Activated CD4-positive, alpha-beta T cell treated with anti-CD3 and anti-CD28 coated beads for 36 hours (primary cell): ENCODE measurements at regions of chr10 and their contacts with region 1.

Region 1: GRCh38 chr10:70619271-70620019 is 16.9 kb upstream of the PRF1 start:
- DNase-seq: no peak
- ATAC-seq: no peak
- H3K4me3 Mint-ChIP-seq: no peak overlapping the region
- H3K27ac Mint-ChIP-seq: no peak overlapping the region
- H3K4me1 Mint-ChIP-seq: peaks cover 16% of the 10 kb centered on the region
- H3K27me3 Mint-ChIP-seq: peaks cover 10% of the 10 kb centered on the region

Region 2: DNA sequence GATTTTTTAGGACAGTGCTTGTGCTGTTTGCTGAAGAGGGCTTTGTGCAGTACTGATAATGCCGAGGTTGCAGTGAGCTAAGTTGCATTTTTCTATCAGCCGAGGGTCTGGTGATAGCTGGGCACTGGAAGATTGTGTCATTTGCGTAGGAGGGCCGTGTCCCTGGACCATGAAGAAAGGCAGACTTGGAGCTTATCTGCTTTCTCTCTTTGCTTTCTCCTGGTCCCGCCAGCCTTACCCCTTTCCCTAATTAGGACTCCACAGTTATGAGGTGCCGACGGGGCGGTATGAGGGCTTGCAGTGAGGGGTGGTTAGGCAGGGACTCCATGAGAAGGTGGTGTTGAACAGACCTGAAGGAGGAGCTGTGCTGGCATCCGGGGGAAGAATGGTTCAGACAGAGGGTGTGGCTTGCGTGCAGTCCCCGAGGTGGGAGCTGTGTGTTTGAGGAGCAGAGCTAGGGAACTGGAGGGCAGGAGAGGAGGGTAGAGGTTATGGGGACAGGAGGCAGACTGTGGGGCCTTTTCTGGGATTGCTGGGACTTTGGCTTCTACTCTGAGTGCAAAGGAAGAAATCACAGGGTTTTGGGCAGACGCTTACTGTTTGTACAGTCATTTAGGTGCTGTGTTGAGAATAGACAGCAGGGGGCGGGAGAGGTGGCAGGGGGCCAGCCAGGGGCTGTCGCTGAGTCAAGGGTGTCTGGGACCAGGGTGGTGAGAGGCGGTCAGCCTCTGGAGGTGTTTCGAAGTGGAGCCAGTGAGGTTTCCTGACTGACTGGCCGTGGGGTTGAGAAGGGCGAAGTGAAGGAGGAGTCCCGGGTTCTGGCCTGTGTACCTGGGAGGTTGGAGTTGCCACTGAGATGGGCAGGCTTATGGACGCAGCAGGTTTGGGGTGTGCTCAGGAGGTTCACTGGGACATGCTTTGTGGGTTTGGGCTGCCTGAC is 60.3 kb before region 1 on chr10:
- CTCF ChIA-PET with region 1: interaction called, 3 read pairs
- POLR2A ChIA-PET with region 1: no interaction called
- intact Hi-C with region 1: loop called in 1 of 2 experiments (anchors 2 kb)
- DNase-seq: peak; percentile 87
- ATAC-seq: peak; percentile 95
- H3K4me3 Mint-ChIP-seq: peak overlapping the region; percentile 60
- H3K27ac Mint-ChIP-seq: peak overlapping the region; percentile 23
- H3K4me1 Mint-ChIP-seq: peaks cover 12% of the 10 kb centered on the region
- H3K27me3 Mint-ChIP-seq: no peaks in the 10 kb centered on the region

Region 3: DNA sequence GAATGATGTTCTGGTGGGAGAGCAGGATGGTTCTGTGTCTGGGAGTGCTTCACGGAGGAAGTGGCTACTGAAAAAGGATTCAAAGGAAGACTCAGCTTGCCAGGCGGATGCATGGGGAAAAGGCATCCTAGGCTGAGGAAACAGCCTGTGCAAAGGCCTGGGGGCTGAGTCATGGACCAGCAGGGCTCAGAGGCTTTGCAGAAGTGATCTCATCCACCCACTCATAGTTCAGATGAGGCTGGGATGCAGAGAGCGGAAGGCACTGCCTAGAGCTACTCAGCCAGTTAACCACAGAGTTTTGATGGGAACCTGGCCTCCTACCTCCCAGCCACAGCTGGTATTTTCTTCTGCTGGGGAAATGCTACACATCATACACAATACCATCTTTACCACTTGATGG is 37.0 kb after region 1 on chr10:
- CTCF ChIA-PET with region 1: interaction called, 6 read pairs
- POLR2A ChIA-PET with region 1: no interaction called
- intact Hi-C with region 1: loop called in 1 of 2 experiments (anchors 2 kb)
- DNase-seq: peak; percentile 87
- ATAC-seq: peak; percentile 100
- H3K4me3 Mint-ChIP-seq: no peak overlapping the region
- H3K27ac Mint-ChIP-seq: peak overlapping the region; percentile 16
- H3K4me1 Mint-ChIP-seq: peaks cover 14% of the 10 kb centered on the region
- H3K27me3 Mint-ChIP-seq: peaks cover 13% of the 10 kb centered on the region